Activated CD4-positive, alpha-beta T cell treated with anti-CD3 and anti-CD28 coated beads, Interleukin-2, amount 10 ng/mL, durations not matched to agents 24 days and 14 days (primary cell): ENCODE measurements at regions of chr3 and their contacts with region 1.

Region 1: DNA sequence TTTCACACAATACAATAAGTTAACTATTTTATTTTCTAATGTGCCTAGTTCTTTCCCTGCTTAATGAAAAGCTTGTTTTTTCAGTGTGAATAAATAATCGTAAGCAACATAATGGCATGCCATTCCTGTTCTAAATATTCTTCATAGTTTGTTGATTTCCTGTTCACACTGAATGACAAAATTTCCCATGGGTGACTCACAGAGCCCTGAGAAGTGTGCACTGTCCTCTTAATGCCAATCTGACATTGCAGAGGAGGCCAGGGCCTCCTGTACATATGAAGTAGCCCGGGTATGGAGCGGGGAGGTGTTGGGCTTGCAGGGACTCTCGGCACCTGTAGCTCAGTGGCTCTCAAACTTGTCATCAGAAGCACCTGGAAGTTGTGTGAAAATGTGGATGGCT is 24.3 kb downstream of the CCR3 start:
- DNase-seq: no peak
- H3K4me3 Mint-ChIP-seq: no peak overlapping the region
- H3K27ac Mint-ChIP-seq: no peak overlapping the region
- H3K4me1 Mint-ChIP-seq: peaks cover 34% of the 10 kb centered on the region
- H3K27me3 Mint-ChIP-seq: peaks cover 36% of the 10 kb centered on the region

Region 2: DNA sequence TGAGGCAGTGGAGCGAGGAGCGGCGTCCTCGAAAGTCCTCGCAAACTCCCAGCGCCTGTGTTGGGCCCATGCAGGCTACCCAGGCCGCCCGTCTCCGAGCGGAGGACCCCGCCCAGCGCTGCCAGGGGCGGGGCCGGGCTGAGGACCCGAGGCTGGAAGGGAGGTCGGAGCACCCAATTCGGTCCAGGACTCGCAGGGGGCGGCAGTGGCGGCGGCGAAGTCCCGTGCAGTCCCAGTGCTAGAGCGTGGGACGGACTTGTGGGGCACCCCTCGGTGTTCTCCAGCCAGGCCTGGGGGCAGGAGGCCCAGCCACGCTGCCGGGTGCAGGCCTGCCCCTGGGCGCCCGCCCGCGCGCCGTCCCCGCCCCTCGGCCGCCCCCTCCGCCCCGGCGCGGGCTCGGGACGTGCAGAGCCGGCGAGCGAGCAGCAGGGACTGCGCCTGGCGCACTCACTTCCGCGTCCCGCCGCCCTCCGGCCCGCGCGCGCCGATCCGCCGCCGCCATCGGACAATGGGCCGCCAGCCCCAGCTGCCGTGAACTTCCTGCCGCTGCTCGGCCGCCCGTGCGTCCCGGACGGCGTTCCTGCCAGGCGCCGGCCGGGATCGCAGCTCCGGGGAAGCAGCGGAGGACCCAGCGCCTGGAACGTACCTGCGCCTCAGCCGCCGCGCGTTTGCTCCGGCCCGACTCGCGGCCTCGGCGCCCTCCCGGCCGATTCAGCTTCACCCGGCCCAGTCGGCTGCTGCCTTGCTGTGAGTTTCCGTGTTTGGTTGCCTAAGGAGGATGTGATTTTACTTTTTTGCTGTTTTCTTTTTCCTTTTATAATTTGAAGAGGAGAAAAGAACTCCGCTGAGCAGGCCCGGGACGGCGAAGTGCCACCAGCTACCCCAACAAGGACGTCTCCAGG is 672.6 kb before region 1 on chr3:
- intact Hi-C with region 1: no loop called
- DNase-seq: peak; percentile 94
- H3K4me3 Mint-ChIP-seq: peak overlapping the region; percentile 83
- H3K27ac Mint-ChIP-seq: peak overlapping the region; percentile 90
- H3K4me1 Mint-ChIP-seq: peaks cover 48% of the 10 kb centered on the region
- H3K27me3 Mint-ChIP-seq: peaks cover 3% of the 10 kb centered on the region

Region 3: DNA sequence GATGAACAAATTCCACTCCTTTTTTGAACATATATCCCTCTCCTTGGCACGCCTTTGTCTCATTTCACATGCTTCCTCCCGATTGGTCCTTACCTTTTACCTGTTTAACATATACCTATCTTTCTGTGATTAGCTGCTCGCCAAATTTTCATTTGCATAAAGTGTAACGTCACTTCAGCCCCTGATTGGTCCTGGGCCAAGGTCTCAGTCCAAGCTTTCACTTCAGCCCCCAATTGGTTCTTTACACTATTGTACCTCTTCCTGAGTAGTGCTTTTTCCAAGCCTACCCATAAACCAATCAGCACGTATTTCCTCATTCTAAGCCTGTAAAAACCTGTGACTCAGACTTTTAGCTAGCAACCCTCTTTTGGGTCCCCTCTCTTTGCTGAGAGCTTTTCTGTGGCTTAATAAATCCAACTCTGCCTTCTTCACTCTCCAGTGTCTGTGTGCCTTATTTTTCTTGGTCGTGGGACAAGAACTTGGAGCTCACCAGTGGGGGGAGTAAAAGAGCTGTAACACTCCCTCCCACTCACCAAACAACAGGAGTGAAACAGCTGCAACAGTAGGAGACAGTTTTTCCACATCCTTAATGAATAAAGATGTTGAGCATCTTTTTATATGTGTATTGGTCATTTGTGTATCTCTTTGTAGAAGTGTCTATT is 238.7 kb before region 1 on chr3:
- intact Hi-C with region 1: no loop called
- DNase-seq: peak; percentile 37
- H3K4me3 Mint-ChIP-seq: no peak overlapping the region
- H3K27ac Mint-ChIP-seq: peak overlapping the region; percentile 36
- H3K4me1 Mint-ChIP-seq: peaks cover 4% of the 10 kb centered on the region
- H3K27me3 Mint-ChIP-seq: peaks cover 18% of the 10 kb centered on the region

Region 4: DNA sequence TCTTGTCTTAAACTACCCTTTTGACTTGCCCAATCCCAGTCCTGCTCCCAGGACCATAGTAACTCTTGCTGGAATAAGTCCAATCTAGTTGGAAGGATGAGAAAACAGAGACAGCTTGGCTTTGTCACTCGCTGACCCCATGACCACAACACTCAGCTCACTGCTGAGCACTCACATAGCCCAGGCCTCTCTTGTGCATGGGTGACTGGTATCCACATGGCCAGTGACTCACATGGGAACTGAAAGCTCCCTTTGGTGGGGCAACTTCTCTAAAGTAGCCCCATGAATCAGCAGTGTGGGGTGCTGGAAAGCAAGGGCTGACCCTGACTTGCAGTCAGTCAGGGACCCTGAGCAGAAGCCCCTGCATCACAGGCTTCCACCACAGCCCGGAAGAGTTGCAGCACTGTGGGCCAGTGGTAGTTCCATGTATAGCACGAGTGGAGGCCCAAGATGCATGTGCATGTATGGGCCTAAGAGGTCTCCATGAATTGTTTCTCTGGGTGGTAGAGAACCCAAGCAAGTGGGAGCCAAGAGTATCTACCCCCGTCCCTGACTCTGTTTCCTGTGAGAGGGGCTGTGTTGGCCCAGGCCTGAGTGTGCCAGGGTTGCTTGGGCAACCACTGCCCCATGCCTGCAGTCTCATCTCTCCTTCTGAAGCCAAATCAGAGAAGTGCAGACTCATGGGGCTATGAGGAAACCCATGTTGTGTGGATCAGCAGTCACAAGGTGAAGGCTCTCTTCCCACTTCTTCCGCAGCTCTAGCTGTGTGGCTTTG is 177.2 kb before region 1 on chr3:
- intact Hi-C with region 1: loop called (anchors 2 kb)
- DNase-seq: no peak
- H3K4me3 Mint-ChIP-seq: no peak overlapping the region
- H3K27ac Mint-ChIP-seq: peak overlapping the region; percentile 18
- H3K4me1 Mint-ChIP-seq: peaks cover 53% of the 10 kb centered on the region
- H3K27me3 Mint-ChIP-seq: peaks cover 13% of the 10 kb centered on the region

Region 5: GRCh38 chr3:46135475-46135874 is 131.1 kb before region 1 on chr3:
- intact Hi-C with region 1: no loop called
- DNase-seq: peak; percentile 71
- H3K4me3 Mint-ChIP-seq: no peak overlapping the region
- H3K27ac Mint-ChIP-seq: no peak overlapping the region
- H3K4me1 Mint-ChIP-seq: peaks cover 7% of the 10 kb centered on the region
- H3K27me3 Mint-ChIP-seq: no peaks in the 10 kb centered on the region

Region 6: DNA sequence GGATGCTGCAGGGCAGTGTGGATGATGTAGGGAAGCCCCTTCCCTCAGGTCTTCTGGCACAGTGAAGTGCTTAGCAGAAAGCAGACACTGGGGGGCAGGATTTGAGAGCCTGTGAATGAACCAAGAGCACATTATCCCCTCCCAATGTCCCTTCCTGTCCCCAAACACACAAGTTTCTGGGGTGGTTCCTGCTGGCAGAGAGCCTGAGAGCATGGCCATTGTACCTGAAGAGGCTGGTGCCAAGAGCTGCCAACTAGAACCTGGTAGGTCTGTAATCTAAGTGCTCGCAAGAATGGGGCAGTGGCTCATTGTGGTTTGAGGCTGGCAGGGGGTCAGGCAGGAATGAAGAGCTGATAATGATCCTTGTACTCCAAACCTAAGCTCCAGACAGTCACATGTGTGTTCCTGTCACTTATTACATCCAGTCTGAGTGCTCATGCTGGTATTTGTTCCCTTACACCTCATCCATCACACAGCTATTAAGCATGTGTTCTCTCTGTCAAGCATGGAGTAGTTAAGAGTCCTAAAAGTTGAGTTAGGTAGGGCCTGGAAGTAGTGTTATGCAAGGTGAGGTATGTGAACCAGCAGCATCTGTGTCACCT is 51.7 kb before region 1 on chr3:
- intact Hi-C with region 1: loop called (anchors 10 kb)
- DNase-seq: peak; percentile 71
- H3K4me3 Mint-ChIP-seq: no peak overlapping the region
- H3K27ac Mint-ChIP-seq: no peak overlapping the region
- H3K4me1 Mint-ChIP-seq: peaks cover 30% of the 10 kb centered on the region
- H3K27me3 Mint-ChIP-seq: peaks cover 19% of the 10 kb centered on the region

Region 7: GRCh38 chr3:46280105-46280797 is 13.7 kb after region 1 on chr3:
- intact Hi-C with region 1: loop called (anchors 1 kb)
- DNase-seq: peak; percentile 88
- H3K4me3 Mint-ChIP-seq: peak overlapping the region; percentile 34
- H3K27ac Mint-ChIP-seq: peak overlapping the region; percentile 72
- H3K4me1 Mint-ChIP-seq: peaks cover 74% of the 10 kb centered on the region
- H3K27me3 Mint-ChIP-seq: peaks cover 5% of the 10 kb centered on the region